ENCODE measurements at regions of chr10 and their contacts with region 1.

Region 1: DNA sequence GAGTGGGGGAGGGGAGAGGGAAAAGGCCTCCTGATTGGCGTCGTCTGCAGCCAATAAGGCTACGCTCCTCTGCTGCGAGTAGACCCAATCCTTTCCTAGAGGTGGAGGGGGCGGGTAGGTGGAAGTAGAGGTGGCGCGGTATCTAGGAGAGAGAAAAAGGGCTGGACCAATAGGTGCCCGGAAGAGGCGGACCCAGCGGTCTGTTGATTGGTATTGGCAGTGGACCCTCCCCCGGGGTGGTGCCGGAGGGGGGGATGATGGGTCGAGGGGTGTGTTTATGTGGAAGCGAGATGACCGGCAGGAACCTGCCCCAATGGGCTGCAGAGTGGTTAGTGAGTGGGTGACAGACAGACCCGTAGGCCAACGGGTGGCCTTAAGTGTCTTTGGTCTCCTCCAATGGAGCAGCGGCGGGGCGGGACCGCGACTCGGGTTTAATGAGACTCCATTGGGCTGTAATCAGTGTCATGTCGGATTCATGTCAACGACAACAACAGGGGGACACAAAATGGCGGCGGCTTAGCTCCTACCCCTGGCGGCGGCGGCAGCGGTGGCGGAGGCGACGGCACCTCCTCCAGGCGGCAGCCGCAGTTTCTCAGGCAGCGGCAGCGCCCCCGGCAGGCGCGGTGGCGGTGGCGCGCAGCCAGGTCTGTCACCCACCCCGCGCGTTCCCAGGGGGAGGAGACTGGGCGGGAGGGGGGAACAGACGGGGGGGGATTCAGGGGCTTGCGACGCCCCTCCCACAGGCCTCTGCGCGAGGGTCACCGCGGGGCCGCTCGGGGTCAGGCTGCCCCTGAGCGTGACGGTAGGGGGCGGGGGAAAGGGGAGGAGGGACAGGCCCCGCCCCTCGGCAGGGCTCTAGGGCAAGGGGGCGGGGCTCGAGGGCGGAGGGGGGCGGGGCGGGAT is at the start of gene KAT6B:
- DNase-seq: peak; percentile 100
- H3K4me3 ChIP-seq: peak within 1 kb of the TSS; percentile 63 to 90
- H3K4me3 Mint-ChIP-seq: peak within 1 kb of the TSS; percentile 87 to 96 (median 94)
- H3K27ac ChIP-seq: peak within 1 kb of the TSS; percentile 93
- H3K27ac Mint-ChIP-seq: peak within 1 kb of the TSS; percentile 91 to 99 (median 98)
- H3K4me1 ChIP-seq: peaks cover 53% of the 10 kb centered on the region
- H3K4me1 Mint-ChIP-seq: peaks cover 60 to 80% (median 63%) of the 10 kb centered on the region in 4 donors
- H3K27me3 ChIP-seq: no peaks in the 10 kb centered on the region
- H3K27me3 Mint-ChIP-seq: no peaks in the 10 kb centered on the region
- total RNA-seq, gene KAT6B: 63.6 to 63.9 TPM

Region 2: DNA sequence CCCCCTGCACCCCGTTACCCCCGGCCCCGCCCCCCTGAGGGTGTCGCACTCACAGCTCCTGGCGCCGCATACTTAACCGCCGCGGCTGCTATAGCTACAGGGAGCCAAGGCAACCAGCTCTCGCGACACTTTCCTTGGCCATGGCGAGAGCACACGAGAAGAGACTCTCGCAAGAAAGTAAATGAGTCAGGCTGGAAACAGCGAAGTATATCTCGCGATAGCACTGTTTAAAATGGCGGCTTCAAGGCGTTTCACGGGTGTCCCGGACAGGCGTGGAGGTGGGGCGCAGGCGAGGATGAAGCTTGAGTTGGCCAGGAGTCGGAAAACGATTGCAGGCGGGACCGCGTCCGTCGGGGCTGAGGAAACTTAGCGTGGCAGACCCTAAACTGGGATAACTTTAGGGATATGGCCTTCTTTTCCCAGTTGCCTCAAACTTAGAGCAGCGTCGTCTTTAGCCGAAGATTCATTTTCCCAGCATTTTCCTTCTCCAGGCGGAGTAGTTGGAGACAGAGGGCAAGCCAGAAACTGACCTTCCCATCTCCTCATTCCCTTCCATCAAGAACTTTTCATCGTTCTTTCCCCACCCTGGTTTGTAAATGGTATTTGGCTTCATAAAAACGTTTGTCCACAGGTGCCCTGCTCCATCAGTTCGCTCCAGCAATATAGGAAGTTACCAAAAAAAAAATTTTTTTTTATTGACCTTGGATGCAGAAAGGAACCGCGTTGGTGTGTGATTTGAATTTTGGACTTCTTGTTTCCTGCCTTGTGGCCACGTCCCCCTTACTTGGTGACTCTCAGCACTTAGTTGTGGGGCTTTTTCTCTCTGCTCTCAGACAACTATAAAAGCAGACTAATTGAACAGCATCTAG is 1200.3 kb before region 1 on chr10:
- CTCF ChIA-PET with region 1: no interaction called
- POLR2A ChIA-PET with region 1: no interaction called
- intact Hi-C with region 1: loop called (anchors 5 kb)
- DNase-seq: peak; percentile 92 to 97 (median 94)
- H3K4me3 ChIP-seq: peak overlapping the region; percentile 74 to 95
- H3K4me3 Mint-ChIP-seq: peak overlapping the region; percentile 90 to 99 (median 96)
- H3K27ac ChIP-seq: peak overlapping the region; percentile 76
- H3K27ac Mint-ChIP-seq: peak overlapping the region; percentile 82 to 100 (median 98)
- H3K4me1 ChIP-seq: peaks cover 16% of the 10 kb centered on the region
- H3K4me1 Mint-ChIP-seq: peaks cover 5 to 26% (median 16%) of the 10 kb centered on the region in 4 donors
- H3K27me3 ChIP-seq: no peaks in the 10 kb centered on the region
- H3K27me3 Mint-ChIP-seq: no peaks in the 10 kb centered on the region

Region 3: GRCh38 chr10:74151056-74151878 is 675.1 kb before region 1 on chr10 and contains the start of gene ADK:
- CTCF ChIA-PET with region 1: no interaction called
- POLR2A ChIA-PET with region 1: no interaction called
- intact Hi-C with region 1: loop called (anchors 1 kb)
- DNase-seq: peak; percentile 99 to 100 (median 99)
- H3K4me3 ChIP-seq: peak within 1 kb of the TSS; percentile 91 to 95
- H3K4me3 Mint-ChIP-seq: no peak within 1 kb of the TSS
- H3K27ac ChIP-seq: peak within 1 kb of the TSS; percentile 84
- H3K27ac Mint-ChIP-seq: peak within 1 kb of the TSS; percentile 7 to 89 (median 78)
- H3K4me1 ChIP-seq: peaks cover 39% of the 10 kb centered on the region
- H3K4me1 Mint-ChIP-seq: peaks cover 24 to 49% (median 36%) of the 10 kb centered on the region in 4 donors
- H3K27me3 ChIP-seq: no peaks in the 10 kb centered on the region
- H3K27me3 Mint-ChIP-seq: no peaks in the 10 kb centered on the region
- total RNA-seq, gene ADK: 33.7 to 38.5 TPM

Region 4: GRCh38 chr10:74419958-74420375 is 406.4 kb before region 1 on chr10:
- CTCF ChIA-PET with region 1: no interaction called
- POLR2A ChIA-PET with region 1: interaction called, 3 read pairs
- intact Hi-C with region 1: loop called (anchors 10 kb)
- DNase-seq: peak in 4 of 5 donors; percentile 31 to 44 (median 40)
- H3K4me3 ChIP-seq: no peak overlapping the region
- H3K4me3 Mint-ChIP-seq: no peak overlapping the region
- H3K27ac ChIP-seq: no peak overlapping the region
- H3K27ac Mint-ChIP-seq: peak overlapping the region in 2 of 7 donors; percentile 4 to 20
- H3K4me1 ChIP-seq: no peaks in the 10 kb centered on the region
- H3K4me1 Mint-ChIP-seq: peaks cover 5 to 11% (median 6%) of the 10 kb centered on the region in 4 donors
- H3K27me3 ChIP-seq: no peaks in the 10 kb centered on the region
- H3K27me3 Mint-ChIP-seq: no peaks in the 10 kb centered on the region

Region 5: DNA sequence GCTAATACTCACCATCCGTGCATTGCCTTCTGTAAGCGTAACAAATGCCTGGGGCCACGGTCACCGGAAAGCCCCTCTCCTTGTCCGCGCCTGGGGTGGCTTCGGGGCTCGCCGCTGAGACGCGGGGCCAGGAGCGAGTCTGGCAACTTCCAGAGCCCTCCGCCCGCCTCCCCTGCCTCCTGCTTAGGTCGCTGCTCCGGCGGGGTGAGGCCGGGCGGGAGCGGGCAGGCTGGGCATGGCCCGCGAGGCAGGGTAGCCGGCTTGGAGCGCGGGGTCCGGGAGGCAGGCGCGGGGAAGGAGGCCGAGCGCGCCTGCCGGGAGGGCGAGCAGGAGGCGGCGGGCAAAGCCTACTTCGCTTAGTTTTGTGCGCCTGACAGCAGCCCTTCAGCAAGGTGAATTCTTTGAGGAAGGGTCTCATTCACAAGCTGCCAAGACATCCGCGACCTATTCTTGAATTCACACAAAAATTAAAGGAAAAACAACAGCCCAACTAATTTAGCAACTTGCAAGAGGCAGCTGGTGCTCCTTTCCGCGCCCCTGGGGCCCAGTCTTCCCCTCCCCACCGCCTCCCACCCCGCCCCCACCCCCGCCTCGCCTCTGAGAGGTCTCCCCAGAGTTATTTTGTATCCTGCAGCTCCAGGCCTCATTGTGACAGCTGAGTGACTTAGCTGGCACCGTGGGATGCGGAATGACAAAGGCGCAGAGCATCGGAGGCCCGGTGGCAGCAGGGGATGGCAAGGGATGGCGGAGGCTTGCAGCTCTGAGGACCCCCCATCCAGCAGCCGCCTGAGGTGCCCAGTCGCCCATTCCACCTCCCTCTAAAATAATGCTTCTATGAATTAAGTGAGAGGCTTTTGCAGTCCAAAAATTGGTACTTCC is 12.8 kb before region 1 on chr10:
- CTCF ChIA-PET with region 1: no interaction called
- POLR2A ChIA-PET with region 1: no interaction called
- intact Hi-C with region 1: no loop called
- DNase-seq: no peak
- H3K4me3 ChIP-seq: no peak overlapping the region
- H3K4me3 Mint-ChIP-seq: no peak overlapping the region
- H3K27ac ChIP-seq: no peak overlapping the region
- H3K27ac Mint-ChIP-seq: no peak overlapping the region
- H3K4me1 ChIP-seq: no peaks in the 10 kb centered on the region
- H3K4me1 Mint-ChIP-seq: no peaks in the 10 kb centered on the region
- H3K27me3 ChIP-seq: no peaks in the 10 kb centered on the region
- H3K27me3 Mint-ChIP-seq: no peaks in the 10 kb centered on the region

Region 6: GRCh38 chr10:74855027-74855426 is 28.6 kb after region 1 on chr10:
- CTCF ChIA-PET with region 1: no interaction called
- POLR2A ChIA-PET with region 1: no interaction called
- intact Hi-C with region 1: loop called (anchors 2 kb)
- DNase-seq: no peak
- H3K4me3 ChIP-seq: no peak overlapping the region
- H3K4me3 Mint-ChIP-seq: peak overlapping the region in 6 of 8 donors; percentile 0 to 56 (median 32)
- H3K27ac ChIP-seq: no peak overlapping the region
- H3K27ac Mint-ChIP-seq: peak overlapping the region in 5 of 7 donors; percentile 1 to 62 (median 29)
- H3K4me1 ChIP-seq: peaks cover 43% of the 10 kb centered on the region
- H3K4me1 Mint-ChIP-seq: peaks cover 34 to 52% (median 40%) of the 10 kb centered on the region in 4 donors
- H3K27me3 ChIP-seq: no peaks in the 10 kb centered on the region
- H3K27me3 Mint-ChIP-seq: no peaks in the 10 kb centered on the region

Region 7: GRCh38 chr10:74963549-74963948 is 137.2 kb after region 1 on chr10:
- CTCF ChIA-PET with region 1: no interaction called
- POLR2A ChIA-PET with region 1: no interaction called
- intact Hi-C with region 1: no loop called
- DNase-seq: no peak
- H3K4me3 ChIP-seq: no peak overlapping the region
- H3K4me3 Mint-ChIP-seq: no peak overlapping the region
- H3K27ac ChIP-seq: no peak overlapping the region
- H3K27ac Mint-ChIP-seq: peak overlapping the region in 1 of 7 donors; percentile 50
- H3K4me1 ChIP-seq: peaks cover 14% of the 10 kb centered on the region
- H3K4me1 Mint-ChIP-seq: peaks cover 27 to 50% (median 41%) of the 10 kb centered on the region in 4 donors
- H3K27me3 ChIP-seq: no peaks in the 10 kb centered on the region
- H3K27me3 Mint-ChIP-seq: no peaks in the 10 kb centered on the region

Region 8: GRCh38 chr10:75235375-75236177 is 409.2 kb after region 1 on chr10 and contains the start of gene COMTD1:
- CTCF ChIA-PET with region 1: interaction called, 5 read pairs
- POLR2A ChIA-PET with region 1: interaction called, 3 read pairs
- intact Hi-C with region 1: loop called (anchors 1 kb)
- DNase-seq: peak; percentile 91 to 95 (median 92)
- H3K4me3 ChIP-seq: peak within 1 kb of the TSS; percentile 52 to 68
- H3K4me3 Mint-ChIP-seq: peak within 1 kb of the TSS; percentile 74 to 87 (median 84)
- H3K27ac ChIP-seq: peak within 1 kb of the TSS; percentile 45
- H3K27ac Mint-ChIP-seq: peak within 1 kb of the TSS; percentile 80 to 99 (median 91)
- H3K4me1 ChIP-seq: peaks cover 18% of the 10 kb centered on the region
- H3K4me1 Mint-ChIP-seq: peaks cover 5 to 36% (median 18%) of the 10 kb centered on the region in 4 donors
- H3K27me3 ChIP-seq: no peaks in the 10 kb centered on the region
- H3K27me3 Mint-ChIP-seq: no peaks in the 10 kb centered on the region
- total RNA-seq, gene COMTD1: 12.7 to 15.4 TPM